ENCODE measurements at regions of chr10 and their contacts with region 1.

Region 1: GRCh38 chr10:98467506-98468346 is 21.0 kb upstream of the HPS1 start:
- H3K4me3 Mint-ChIP-seq: peak overlapping the region; percentile 89
- H3K27ac Mint-ChIP-seq: peak overlapping the region; percentile 54
- H3K4me1 Mint-ChIP-seq: peaks cover 13% of the 10 kb centered on the region
- H3K27me3 Mint-ChIP-seq: peaks cover 28% of the 10 kb centered on the region

Region 2: DNA sequence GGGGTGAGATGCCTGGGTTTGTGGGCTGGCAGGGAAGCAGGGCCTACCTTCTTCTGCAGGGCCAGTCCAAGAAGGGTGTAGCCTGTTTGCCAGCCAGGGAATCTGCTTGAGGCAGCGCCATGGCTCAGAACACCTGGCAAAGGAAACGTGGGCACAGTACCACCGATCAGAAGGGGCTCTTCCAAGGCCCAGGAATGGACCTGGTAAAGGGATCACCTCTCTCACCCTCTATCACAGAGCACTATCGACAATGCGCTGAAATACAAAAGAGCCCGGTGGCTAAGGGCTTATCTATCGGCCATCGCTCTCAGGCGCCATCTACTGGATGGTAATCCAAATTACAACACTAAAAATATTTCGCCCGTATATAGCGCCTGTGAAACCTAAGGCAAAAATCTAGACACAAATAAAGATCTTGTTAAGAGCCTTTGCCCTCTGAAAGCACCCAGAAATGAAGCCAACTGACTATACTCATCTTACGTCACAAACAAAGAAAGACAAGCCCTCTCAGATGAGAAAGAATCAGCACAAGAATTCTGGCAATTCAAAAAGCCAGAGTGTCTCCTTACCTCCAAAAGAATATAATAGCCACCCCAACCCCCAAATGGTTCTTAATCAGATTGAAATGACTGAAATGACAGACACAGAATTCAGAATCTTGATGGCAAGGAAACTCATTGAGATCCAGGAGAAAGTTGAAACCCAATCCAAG is 196.8 kb after region 1 on chr10:
- intact Hi-C with region 1: loop called (anchors 1 kb)
- H3K4me3 Mint-ChIP-seq: no peak overlapping the region
- H3K27ac Mint-ChIP-seq: no peak overlapping the region
- H3K4me1 Mint-ChIP-seq: no peaks in the 10 kb centered on the region
- H3K27me3 Mint-ChIP-seq: peaks cover 4% of the 10 kb centered on the region

Region 3: DNA sequence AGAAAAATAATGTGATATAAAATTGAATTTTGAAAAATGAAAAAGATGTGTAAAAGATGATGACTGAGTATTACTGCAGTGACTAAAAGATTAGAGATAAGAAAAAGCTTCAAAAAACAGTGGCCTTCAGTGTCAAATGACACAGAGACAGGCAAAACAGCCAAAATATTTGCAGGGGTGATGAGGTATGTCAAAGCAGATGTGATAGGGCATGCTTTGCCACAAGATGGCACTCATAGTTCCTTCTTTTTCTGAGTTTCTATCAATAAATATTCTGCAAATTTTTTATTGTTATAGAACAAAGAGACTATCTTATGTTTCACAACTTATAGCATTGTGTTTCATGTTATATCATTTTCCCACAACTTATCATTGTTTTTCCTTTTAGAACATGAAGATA is 323.1 kb after region 1 on chr10:
- intact Hi-C with region 1: loop called (anchors 5 kb)
- H3K4me3 Mint-ChIP-seq: no peak overlapping the region
- H3K27ac Mint-ChIP-seq: no peak overlapping the region
- H3K4me1 Mint-ChIP-seq: no peaks in the 10 kb centered on the region
- H3K27me3 Mint-ChIP-seq: peaks cover 3% of the 10 kb centered on the region

Region 4: DNA sequence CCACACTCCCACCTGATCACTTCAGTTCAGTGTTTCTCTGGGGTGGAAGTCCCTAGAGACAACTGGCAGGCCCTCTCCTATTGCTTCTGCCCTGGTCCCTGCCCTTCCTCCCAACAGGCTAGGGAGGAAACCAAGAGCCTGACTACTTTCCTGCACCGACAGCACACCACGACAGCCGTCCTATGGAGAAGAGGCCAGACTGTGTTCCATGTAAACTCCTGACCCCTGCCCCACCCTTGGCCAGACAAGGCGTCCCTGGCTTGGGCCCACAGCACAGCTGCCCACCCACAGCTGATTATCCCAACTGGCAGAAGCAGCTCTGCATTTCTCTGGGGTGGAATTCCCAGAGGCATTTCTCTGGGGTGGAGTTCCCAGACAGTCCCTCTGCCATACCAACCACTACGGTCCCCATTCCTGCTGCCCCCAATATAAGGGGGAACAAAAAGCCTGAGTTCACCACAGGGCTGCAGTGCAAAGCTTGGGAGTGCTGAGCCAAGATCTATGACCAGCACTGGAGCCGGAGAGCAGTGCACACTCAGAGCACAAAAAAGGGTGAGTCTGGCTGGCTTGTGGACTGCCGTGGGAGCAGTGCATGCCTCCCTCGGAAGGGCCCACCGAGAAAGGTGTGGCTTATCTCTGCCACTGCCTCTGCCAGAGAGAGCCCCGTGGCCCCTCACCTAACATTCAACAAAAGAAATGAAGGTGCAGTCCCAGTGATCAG is 574.5 kb after region 1 on chr10:
- intact Hi-C with region 1: loop called (anchors 10 kb)
- H3K4me3 Mint-ChIP-seq: no peak overlapping the region
- H3K27ac Mint-ChIP-seq: no peak overlapping the region
- H3K4me1 Mint-ChIP-seq: no peaks in the 10 kb centered on the region
- H3K27me3 Mint-ChIP-seq: no peaks in the 10 kb centered on the region

Region 5: DNA sequence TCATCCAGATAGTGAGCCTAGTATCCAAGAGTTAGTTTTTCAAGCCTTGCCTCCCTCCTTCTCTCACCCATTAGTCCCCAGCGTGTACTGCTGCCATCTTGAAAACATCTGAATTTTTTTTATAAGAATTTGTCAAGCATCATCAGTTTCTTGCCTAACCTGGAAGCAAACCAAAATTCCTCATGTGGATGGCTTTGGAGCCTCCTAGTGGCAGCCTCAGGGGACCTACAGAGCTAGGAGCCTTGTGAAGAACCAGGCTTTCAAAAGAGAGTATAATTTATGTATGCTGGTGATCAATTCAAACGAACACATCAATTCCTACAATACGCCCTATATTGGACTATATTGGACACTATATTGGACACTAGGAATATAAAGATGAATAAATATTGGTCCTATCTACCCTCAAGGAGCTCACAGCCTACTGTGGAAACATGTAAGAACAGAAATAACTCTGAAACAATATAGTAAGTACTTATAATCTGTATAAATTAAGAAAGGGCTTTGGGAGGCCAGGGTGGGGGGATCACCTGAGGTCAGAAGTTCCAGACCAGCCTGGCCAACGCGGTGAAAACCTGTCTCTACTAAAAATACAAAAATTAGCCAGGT is 704.5 kb after region 1 on chr10:
- intact Hi-C with region 1: loop called (anchors 2 kb)
- H3K4me3 Mint-ChIP-seq: no peak overlapping the region
- H3K27ac Mint-ChIP-seq: no peak overlapping the region
- H3K4me1 Mint-ChIP-seq: no peaks in the 10 kb centered on the region
- H3K27me3 Mint-ChIP-seq: no peaks in the 10 kb centered on the region

Region 6: DNA sequence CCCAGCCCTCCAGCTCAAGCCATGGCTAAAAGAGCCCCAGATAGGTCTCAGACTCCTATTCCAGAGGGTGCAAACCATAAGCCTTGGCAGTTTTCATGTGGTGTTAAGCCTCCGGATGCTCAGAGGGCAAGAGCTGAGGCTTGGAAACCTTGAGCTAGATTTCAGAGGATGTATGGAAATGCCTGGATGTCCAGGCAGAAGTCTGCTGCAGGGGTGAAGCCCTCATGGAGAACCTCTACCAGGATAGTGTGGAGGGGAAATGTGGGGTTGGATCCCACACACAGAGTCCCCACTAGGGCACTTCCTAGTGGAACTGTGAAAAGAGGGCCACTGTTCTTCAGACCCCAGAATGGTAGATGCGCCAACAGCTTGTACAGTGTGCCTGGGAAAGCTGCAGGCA is 781.1 kb after region 1 on chr10:
- intact Hi-C with region 1: loop called (anchors 1 kb)
- H3K4me3 Mint-ChIP-seq: no peak overlapping the region
- H3K27ac Mint-ChIP-seq: no peak overlapping the region
- H3K4me1 Mint-ChIP-seq: no peaks in the 10 kb centered on the region
- H3K27me3 Mint-ChIP-seq: no peaks in the 10 kb centered on the region